ENCODE measurements at regions of chr19 and their contacts with region 1.

Region 1: DNA sequence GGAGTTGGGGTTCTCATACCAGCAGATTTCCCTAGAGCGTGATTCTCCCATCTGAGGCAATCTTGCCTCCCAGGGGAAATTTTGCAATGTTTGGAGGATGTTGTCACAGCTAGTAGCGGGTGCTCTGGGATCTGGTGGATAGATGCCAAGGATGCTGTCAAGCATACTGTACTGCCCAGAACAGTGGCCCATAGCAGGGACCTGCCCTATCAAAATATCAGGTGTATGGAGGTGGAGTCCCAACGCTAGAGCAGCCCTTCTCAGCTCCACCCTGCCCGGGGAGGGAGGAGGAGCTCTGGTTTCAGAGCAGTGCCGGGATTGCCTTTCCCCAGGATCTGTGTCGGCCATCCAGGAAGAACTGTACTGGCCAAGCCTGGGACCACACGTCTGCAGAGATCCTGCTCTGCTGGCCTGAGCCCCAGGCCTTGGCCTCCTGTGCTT is 10.9 kb upstream of the QTRT1 start:
- DNase-seq: no peak

Region 2: GRCh38 chr19:10654493-10655304 is 35.7 kb before region 1 on chr19:
- intact Hi-C with region 1: loop called (anchors 5 kb)
- DNase-seq: peak in 30 of 42 donors; percentile 15 to 76 (median 50)

Measured in head of caudate nucleus (tissue), 42 donors.